ENCODE measurements at regions of chr5 and their contacts with region 1.

Region 1: DNA sequence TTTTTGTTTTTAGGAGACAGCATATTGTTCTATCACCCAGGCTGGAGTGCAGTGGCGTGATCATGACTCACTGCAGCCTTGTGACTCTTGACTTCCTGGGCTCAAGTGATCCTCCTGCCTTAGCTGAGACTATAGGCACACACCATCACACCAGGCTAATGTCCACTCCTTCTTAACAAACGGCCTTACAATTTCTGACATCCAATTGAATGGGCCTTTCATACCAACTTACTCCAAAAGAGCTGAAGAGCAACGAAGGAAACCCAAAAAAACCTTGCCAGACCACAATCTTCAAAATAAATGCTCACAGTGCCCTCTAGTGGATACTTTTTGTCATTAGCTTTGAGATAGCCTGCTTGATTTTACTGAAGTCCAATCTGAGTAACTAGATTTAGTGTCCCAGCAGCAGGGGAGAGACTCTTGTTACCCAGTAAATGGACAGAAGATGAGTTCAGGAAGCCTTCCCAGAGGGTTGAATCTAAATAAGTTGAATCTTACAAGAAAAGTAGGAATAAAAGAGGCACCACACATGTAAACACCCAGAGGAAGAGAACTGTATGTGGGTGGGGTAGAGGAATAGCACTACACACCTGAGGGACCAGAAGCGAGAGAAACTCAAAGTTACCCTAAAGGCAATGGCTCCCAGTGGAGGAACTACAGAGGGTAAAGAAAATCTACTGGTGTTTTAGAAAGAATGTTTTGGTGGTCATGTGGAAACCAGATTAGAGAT is 9.3 kb downstream of the ZNF622 start:
- DNase-seq: no peak
- ATAC-seq: peak; percentile 17 to 73 (median 52)
- H3K4me3 ChIP-seq: no peak overlapping the region
- H3K27ac ChIP-seq: peak overlapping the region in 8 of 10 donors; percentile 5 to 63 (median 22)
- H3K4me1 ChIP-seq: peaks cover 3 to 86% (median 49%) of the 10 kb centered on the region in 9 donors
- H3K27me3 ChIP-seq: no peaks in the 10 kb centered on the region
- CTCF ChIP-seq: peak; percentile 31 to 77 (median 70)

Region 2: DNA sequence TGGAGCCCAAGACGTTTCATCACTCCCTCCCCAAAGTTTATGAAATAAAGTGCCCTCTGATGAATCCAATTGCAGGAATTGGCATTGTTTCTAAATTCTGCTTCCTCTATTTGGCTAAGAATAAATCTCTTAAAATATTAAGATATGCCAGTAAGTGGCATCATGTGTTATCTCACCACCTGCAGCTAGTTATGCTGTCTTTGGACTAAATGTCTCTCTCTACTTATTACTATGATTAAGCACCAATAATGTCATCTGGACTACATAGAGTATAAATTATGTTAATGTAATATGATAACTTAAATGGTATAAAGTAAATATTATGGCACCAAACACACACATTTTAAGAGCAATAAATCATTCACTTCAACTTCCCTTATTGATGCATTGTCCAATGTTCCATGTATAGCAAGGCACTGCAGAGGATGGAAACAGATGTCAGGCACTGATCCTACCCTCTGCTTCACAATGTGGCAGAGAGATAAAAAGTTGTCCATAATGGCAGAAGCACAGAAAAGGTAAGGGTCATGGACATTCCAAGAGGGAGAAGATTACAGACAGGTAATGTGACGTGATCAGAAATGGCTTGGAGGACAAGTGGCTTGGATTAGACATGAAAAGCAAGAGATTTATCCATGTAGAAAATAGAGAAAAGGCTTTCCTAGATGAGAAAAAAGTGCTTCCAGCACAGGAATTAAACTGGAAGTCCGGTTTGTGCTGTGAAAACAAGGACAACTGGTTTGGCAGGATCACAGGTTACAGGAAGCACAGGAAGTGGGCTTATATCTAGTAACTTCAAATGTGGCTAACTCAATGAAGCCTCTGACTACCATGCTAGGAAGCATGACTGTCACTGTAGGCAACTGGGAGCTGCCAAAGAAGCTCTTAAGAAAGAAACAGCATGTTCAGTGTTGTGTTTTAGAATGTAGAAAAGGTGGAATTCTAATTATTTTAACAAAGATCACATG is 303.4 kb before region 1 on chr5:
- intact Hi-C with region 1: loop called in 2 of 10 experiments (anchors 2 to 5 kb)
- DNase-seq: no peak
- ATAC-seq: peak in 1 of 8 donors; percentile 33
- H3K4me3 ChIP-seq: peak overlapping the region in 3 of 10 donors; percentile 14 to 23 (median 18)
- H3K27ac ChIP-seq: peak overlapping the region in 7 of 10 donors; percentile 17 to 60 (median 45)
- H3K4me1 ChIP-seq: peaks cover 0 to 11% (median 0%) of the 10 kb centered on the region in 9 donors
- H3K27me3 ChIP-seq: no peaks in the 10 kb centered on the region
- CTCF ChIP-seq: no peak

Region 3: GRCh38 chr5:16178745-16179372 is 277.4 kb before region 1 on chr5:
- intact Hi-C with region 1: loop called in 1 of 10 experiments (anchors 10 kb)
- DNase-seq: peak; percentile 66 to 79
- ATAC-seq: peak; percentile 86 to 97 (median 91)
- H3K4me3 ChIP-seq: peak overlapping the region in 9 of 10 donors; percentile 15 to 47 (median 41)
- H3K27ac ChIP-seq: no peak overlapping the region
- H3K4me1 ChIP-seq: peaks cover 0 to 5% (median 0%) of the 10 kb centered on the region in 9 donors
- H3K27me3 ChIP-seq: peaks cover 0 to 62% (median 38%) of the 10 kb centered on the region in 7 donors
- CTCF ChIP-seq: peak in 2 of 9 donors; percentile 3 to 28

Region 4: DNA sequence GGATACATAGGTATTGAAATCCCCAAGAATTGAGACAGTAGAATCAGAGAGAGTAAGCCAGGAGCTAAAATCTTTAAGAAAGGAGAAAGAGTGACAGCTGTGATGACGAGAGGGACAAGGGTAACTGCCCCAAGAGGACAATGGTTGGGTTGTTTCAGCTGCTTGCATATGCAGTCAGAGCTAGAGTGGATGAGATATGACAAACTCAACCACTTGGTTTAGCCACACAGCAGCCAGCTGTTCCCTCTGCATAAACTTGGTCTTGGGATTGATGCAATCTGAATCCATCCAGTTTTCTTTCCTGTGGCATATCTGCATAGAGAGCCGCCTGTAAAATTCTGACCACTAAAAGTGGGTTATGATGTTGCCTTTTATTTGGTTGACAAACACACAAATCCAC is 91.4 kb before region 1 on chr5:
- intact Hi-C with region 1: loop called in 1 of 10 experiments (anchors 5 kb)
- DNase-seq: no peak
- ATAC-seq: no peak
- H3K4me3 ChIP-seq: no peak overlapping the region
- H3K27ac ChIP-seq: no peak overlapping the region
- H3K4me1 ChIP-seq: no peaks in the 10 kb centered on the region
- H3K27me3 ChIP-seq: no peaks in the 10 kb centered on the region
- CTCF ChIP-seq: no peak